ENCODE measurements at regions of chr15 and their contacts with region 1.

Region 1: DNA sequence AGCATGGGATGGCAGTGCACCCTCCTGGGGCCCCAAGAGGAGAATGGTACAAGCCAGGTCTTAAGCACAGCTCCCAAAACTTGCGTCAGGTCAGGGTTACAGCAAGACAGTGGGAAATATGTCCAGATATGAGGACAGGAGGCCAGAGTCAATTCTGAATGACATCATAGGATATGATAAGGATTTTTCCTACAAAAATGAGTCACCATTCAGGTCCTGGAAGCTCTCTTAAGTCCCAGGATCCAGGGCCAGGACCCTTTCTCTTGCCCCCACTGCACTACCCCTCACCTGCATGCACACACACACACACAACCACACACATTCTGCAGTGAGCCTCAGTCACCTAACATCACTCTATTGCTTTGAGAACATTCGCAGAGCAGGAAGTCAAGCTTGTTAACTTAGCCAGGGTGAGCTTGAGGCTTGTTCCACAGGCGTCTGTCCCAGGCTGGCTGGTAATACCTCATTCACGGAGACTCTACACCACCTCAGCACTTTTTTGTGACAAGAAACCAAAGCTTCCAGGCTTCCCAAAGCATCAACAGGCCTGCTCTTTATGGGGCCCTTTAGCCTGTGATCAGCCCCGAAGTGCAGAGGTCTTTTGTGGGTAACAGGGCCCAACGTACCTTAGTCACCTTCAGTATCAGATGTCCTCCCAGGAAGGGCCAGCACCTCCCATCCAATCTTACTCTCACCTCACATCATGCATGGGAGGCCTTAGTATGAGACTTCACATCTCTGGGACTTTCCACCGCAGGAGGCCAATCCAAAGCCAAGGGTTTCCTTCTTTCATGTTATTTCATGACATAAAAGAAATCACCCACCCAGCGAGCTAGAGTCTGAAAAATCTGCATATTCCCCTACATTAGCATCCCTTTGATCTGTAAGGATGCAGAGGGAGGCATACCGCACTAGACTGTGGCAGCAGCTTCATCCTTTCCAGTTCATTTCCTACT is 74.0 kb upstream of the LIPC start:
- DNase-seq: peak; percentile 86
- H3K4me3 Mint-ChIP-seq: peak overlapping the region; percentile 20
- H3K27ac Mint-ChIP-seq: peak overlapping the region; percentile 72
- H3K4me1 Mint-ChIP-seq: peaks cover 52% of the 10 kb centered on the region
- H3K27me3 Mint-ChIP-seq: no peaks in the 10 kb centered on the region

Region 2: DNA sequence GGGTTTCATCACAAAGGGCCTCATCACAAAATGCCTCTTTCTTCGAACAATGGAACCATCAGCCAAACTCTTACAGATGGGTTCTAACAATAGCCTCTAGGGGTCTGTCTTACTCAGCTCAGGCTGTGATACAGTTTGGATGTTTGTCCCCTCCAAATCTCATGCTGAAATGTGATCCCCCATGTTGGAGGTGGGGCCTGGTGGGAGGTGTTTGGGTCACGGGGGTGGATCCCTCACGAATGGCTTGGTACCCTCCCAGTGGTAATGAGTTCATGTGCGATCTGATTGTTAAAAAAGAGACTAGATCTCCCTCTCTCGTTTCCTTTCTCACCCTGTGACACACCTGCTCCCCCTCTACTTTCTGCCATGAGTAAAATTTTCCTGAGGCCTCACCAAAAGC is 26.1 kb after region 1 on chr15:
- CTCF ChIA-PET with region 1: interaction called, 4 read pairs
- intact Hi-C with region 1: loop called (anchors 2 kb)
- DNase-seq: peak; percentile 73
- H3K4me3 Mint-ChIP-seq: no peak overlapping the region
- H3K27ac Mint-ChIP-seq: peak overlapping the region; percentile 14
- H3K4me1 Mint-ChIP-seq: peaks cover 17% of the 10 kb centered on the region
- H3K27me3 Mint-ChIP-seq: no peaks in the 10 kb centered on the region

Region 3: GRCh38 chr15:58423831-58424608 is 66.2 kb after region 1 on chr15:
- CTCF ChIA-PET with region 1: no interaction called
- intact Hi-C with region 1: loop called (anchors 5 kb)
- DNase-seq: peak; percentile 44
- H3K4me3 Mint-ChIP-seq: no peak overlapping the region
- H3K27ac Mint-ChIP-seq: no peak overlapping the region
- H3K4me1 Mint-ChIP-seq: peaks cover 20% of the 10 kb centered on the region
- H3K27me3 Mint-ChIP-seq: no peaks in the 10 kb centered on the region

Region 4: DNA sequence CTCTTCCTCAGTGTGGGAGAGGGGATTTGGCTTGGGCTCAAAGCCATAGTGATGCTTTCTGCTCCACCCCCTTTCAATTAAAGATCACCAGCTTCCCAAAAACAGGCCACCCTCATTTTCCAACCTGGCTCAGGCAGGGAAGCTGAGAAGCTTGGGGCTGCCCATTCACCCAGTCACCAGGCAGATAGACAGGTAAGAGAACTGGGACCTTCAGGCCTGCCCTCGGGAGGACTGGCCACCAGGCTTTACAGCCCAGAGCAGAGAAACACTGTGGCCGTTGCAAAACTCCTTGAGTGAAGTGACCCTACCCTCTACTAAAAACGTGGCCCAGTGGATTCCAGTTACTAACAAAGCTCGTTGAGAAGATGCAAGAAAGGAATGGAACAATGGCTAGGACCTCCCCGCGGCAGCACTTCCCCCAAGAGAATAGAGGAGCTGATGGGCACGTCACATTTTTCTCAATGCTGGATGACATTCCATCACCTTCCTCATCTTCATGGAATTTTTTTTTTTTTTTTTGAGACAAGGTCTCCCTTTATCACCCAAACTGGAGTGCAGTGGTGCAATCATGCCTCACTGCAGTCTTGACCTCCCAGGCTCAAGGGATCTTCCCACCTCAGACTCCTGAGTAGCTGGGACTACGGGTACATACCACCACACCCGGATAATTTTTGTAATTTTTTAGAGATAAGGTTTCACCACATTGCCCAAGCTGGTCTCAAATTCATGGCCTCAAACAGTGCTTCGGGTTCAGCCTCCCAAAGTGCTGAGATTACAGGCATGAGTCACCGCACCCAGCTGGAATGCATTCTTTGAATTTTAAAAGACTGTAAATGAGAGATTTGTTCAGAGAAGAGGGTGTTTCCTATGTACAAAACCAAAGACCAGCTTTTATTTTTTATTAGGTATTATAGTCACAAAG is 111.9 kb after region 1 on chr15:
- CTCF ChIA-PET with region 1: no interaction called
- intact Hi-C with region 1: loop called (anchors 2 kb)
- DNase-seq: no peak
- H3K4me3 Mint-ChIP-seq: no peak overlapping the region
- H3K27ac Mint-ChIP-seq: no peak overlapping the region
- H3K4me1 Mint-ChIP-seq: peaks cover 42% of the 10 kb centered on the region
- H3K27me3 Mint-ChIP-seq: no peaks in the 10 kb centered on the region

Region 5: DNA sequence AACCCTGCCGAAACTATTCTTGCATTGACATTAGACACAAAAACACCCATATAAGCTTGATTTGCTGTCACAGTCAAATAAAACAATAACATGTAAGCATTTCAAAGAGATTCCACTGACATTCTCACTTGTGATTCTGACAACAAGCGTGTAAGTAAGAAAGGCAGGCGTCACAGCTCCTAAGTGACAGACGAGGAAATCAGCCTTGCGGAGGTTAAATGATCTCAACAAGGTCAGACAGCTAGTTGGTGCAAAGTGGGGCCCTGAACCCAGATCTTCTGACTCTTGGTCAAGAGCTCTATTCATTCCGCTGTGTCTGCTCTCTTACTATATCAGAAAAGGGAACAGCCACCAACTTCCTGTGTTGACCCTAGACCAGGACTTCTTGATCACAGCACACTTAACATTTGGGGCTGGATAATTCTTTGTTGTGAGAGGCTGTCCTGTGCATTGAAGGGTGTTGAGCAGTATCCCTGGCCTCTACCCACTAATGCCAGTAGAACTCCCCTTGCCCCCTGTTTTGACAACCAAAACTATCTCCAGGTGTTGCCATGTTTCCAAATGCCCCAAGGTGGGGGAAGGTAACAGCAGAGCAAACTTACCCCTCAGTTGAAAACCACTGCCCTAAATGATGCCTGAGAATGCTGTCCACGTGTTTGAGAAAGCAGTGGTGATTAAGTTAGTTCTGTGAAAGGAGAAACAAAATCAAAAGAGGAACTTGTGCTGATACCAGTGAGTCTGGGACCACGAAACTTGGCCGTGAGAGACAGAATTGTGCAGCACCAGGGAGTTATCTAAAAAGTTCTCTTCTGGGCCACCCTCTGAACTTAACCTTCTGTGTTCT is 160.1 kb after region 1 on chr15:
- CTCF ChIA-PET with region 1: no interaction called
- intact Hi-C with region 1: loop called (anchors 2 kb)
- DNase-seq: peak; percentile 38
- H3K4me3 Mint-ChIP-seq: no peak overlapping the region
- H3K27ac Mint-ChIP-seq: peak overlapping the region; percentile 43
- H3K4me1 Mint-ChIP-seq: peaks cover 62% of the 10 kb centered on the region
- H3K27me3 Mint-ChIP-seq: no peaks in the 10 kb centered on the region

Region 6: GRCh38 chr15:58770857-58771620 is 413.2 kb after region 1 on chr15 and contains the start of gene MINDY2:
- CTCF ChIA-PET with region 1: no interaction called
- intact Hi-C with region 1: loop called (anchors 5 kb)
- DNase-seq: peak; percentile 95
- H3K4me3 Mint-ChIP-seq: peak within 1 kb of the TSS; percentile 92
- H3K27ac Mint-ChIP-seq: peak within 1 kb of the TSS; percentile 65
- H3K4me1 Mint-ChIP-seq: no peaks in the 10 kb centered on the region
- H3K27me3 Mint-ChIP-seq: no peaks in the 10 kb centered on the region
- total RNA-seq, gene MINDY2: 4.6 to 6.6 TPM

Measured in activated naive CD4-positive, alpha-beta T cell treated with anti-CD3 and anti-CD28 coated beads for 36 hours (primary cell).